OCI-LY7 (cell line): ENCODE measurements at regions of chr5 and their contacts with region 1.

Region 1: GRCh38 chr5:156934450-156935211 is 28.4 kb downstream of the TIMD4 start:
- DNase-seq: peak; percentile 87
- H3K4me3 ChIP-seq: no peak overlapping the region
- H3K27ac ChIP-seq: peak overlapping the region; percentile 97
- H3K4me1 ChIP-seq: peaks cover 83% of the 10 kb centered on the region
- CTCF ChIP-seq: peak; percentile 100

Region 2: GRCh38 chr5:155943516-155944407 is 990.9 kb before region 1 on chr5:
- CTCF ChIA-PET with region 1: no interaction called
- POLR2A ChIA-PET with region 1: no interaction called
- intact Hi-C with region 1: loop called (anchors 10 kb)
- DNase-seq: peak; percentile 45
- H3K4me3 ChIP-seq: no peak overlapping the region
- H3K27ac ChIP-seq: no peak overlapping the region
- H3K4me1 ChIP-seq: peaks cover 4% of the 10 kb centered on the region
- CTCF ChIP-seq: peak; percentile 79

Region 3: DNA sequence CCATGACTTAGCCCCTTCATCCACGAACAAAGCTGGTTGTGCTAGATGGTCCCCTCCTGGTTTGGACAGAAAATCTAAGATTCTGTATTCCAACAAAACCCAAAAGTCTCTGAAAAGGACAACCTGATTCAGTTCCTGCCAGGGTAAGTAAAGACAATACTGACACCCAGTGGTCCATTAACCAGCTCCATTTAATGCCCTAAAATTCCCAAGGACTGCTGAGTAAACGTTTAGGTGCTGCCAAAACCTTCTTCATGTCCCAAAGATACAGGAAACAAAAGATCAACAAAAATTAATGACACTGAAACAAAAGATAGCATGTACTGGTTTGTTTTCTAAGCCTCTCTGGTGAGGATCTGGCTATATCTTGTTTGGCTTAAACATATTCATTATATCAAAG is 109.8 kb before region 1 on chr5:
- CTCF ChIA-PET with region 1: no interaction called
- POLR2A ChIA-PET with region 1: interaction called, 7 read pairs
- intact Hi-C with region 1: loop called (anchors 2 kb)
- DNase-seq: peak; percentile 67
- H3K4me3 ChIP-seq: peak overlapping the region; percentile 48
- H3K27ac ChIP-seq: peak overlapping the region; percentile 77
- H3K4me1 ChIP-seq: peaks cover 89% of the 10 kb centered on the region
- CTCF ChIP-seq: peak; percentile 83

Region 4: GRCh38 chr5:156893517-156893916 is 41.1 kb before region 1 on chr5:
- CTCF ChIA-PET with region 1: no interaction called
- POLR2A ChIA-PET with region 1: interaction called, 250 read pairs
- intact Hi-C with region 1: loop called (anchors 1 kb)
- DNase-seq: peak; percentile 86
- H3K4me3 ChIP-seq: peak overlapping the region; percentile 19
- H3K27ac ChIP-seq: peak overlapping the region; percentile 92
- H3K4me1 ChIP-seq: peaks cover 76% of the 10 kb centered on the region
- CTCF ChIP-seq: no peak

Region 5: GRCh38 chr5:156947796-156948324 is 13.2 kb after region 1 on chr5:
- CTCF ChIA-PET with region 1: no interaction called
- POLR2A ChIA-PET with region 1: interaction called, 20 read pairs
- intact Hi-C with region 1: no loop called
- DNase-seq: peak; percentile 36
- H3K4me3 ChIP-seq: no peak overlapping the region
- H3K27ac ChIP-seq: no peak overlapping the region
- H3K4me1 ChIP-seq: peaks cover 20% of the 10 kb centered on the region
- CTCF ChIP-seq: no peak

Region 6: GRCh38 chr5:157026789-157027424 is 92.3 kb after region 1 on chr5:
- CTCF ChIA-PET with region 1: interaction called, 3 read pairs
- POLR2A ChIA-PET with region 1: interaction called, 8 read pairs
- intact Hi-C with region 1: loop called (anchors 1 kb)
- DNase-seq: peak; percentile 64
- H3K4me3 ChIP-seq: no peak overlapping the region
- H3K27ac ChIP-seq: no peak overlapping the region
- H3K4me1 ChIP-seq: peaks cover 59% of the 10 kb centered on the region
- CTCF ChIP-seq: peak; percentile 97